ENCODE measurements at regions of chr9 and their contacts with region 1.

Region 1: DNA sequence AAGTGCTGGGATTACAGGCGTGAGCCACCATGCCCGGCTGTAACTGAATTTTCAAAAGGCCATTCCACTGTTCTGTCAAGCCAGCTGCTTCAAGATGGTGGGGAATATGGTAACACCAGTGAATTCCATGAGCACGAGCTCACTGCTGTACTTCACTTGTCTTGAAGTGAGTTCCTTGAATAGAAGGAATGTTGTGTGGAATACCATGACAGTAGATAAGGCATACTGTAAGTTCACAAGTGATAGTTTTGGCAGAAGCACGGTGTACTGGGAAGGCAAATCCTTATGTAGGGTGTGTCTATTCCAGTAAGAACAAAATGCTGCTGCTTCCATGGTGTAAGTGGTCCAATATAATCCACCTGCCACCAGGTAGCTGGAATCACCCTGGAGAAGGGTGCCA is 6.6 kb upstream of the PRXL2C start:
- DNase-seq: no peak
- ATAC-seq: no peak
- H3K4me3 ChIP-seq: no peak overlapping the region
- H3K27ac ChIP-seq: no peak overlapping the region
- H3K4me1 ChIP-seq: peaks cover 5% of the 10 kb centered on the region
- H3K27me3 ChIP-seq: no peaks in the 10 kb centered on the region

Region 2: DNA sequence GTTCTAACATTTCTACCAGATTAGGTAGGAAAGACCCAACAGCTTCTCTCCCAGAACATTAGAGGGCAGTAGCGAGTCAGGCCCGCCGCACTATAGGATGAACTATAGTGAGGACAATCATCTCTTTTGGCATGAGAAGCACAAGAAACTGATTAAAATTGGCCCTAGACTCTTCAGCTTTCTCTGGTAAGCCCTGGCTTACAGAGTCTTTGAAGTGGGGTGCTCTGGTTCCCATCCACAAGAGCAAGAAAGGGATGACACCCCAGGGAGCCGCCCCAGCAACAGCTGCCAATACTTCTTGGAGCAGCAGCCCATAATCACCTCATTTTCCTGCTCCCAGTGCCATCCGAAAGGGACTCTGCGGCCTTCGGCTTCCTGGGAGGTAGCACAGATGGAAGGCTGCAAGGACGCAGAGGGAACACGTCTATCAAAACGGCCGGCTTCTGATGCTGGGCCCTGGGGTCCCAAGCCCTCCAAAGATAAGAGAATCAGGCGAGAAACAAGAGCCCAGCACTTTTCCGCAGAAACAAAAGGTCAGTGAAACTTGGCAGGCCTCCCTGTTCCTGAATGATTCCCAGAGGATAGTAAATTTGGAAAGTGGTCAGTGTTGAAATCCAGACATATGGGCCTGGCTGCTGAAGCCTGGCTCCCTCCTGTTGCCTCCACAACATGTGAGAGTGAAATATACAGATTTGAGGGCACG is 429.0 kb before region 1 on chr9:
- intact Hi-C with region 1: loop called in 1 of 4 experiments (anchors 10 kb)
- DNase-seq: peak; percentile 78 to 90 (median 84)
- ATAC-seq: peak; percentile 90 to 94
- H3K4me3 ChIP-seq: no peak overlapping the region
- H3K27ac ChIP-seq: peak overlapping the region; percentile 77
- H3K4me1 ChIP-seq: peaks cover 1% of the 10 kb centered on the region
- H3K27me3 ChIP-seq: peaks cover 3% of the 10 kb centered on the region

Region 3: DNA sequence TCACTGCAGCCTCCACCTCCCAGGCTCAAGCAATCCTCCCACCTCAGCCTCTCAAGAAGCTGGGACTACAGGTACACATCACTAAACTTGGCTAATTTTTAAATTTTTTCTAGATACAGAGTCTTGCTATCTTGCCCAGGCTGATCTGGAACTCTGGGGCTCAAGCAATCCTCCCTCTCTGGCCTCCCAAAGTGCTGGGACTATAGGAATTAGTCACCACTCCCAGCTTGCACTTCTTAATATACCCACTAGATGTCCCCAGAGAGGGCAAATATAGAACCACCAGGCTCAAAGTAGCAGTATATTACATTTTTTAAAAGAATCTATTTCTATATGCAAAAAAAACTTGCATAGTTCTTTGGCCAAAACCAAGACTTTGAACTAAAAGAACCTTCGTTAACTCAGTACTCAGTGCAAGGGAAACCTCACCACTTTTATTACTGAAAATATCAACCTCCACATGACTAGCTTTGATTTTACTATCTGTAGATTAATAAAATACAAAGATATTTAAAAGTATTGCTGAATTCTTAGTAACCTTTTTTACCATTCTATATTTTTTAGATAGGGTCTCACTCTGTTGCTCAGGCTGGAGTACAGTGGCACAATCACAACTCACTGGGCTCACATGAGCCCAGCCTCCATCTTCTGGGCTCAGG is 333.9 kb before region 1 on chr9:
- intact Hi-C with region 1: loop called (anchors 5 to 10 kb)
- DNase-seq: no peak
- ATAC-seq: peak; percentile 55 to 76
- H3K4me3 ChIP-seq: no peak overlapping the region
- H3K27ac ChIP-seq: no peak overlapping the region
- H3K4me1 ChIP-seq: no peaks in the 10 kb centered on the region
- H3K27me3 ChIP-seq: no peaks in the 10 kb centered on the region

Region 4: GRCh38 chr9:96449845-96450612 is 211.7 kb before region 1 on chr9 and contains the start of gene HABP4:
- intact Hi-C with region 1: loop called in 1 of 4 experiments (anchors 10 kb)
- DNase-seq: peak; percentile 98 to 100 (median 99)
- ATAC-seq: peak; percentile 99
- H3K4me3 ChIP-seq: peak within 1 kb of the TSS; percentile 70
- H3K27ac ChIP-seq: peak within 1 kb of the TSS; percentile 89
- H3K4me1 ChIP-seq: no peaks in the 10 kb centered on the region
- H3K27me3 ChIP-seq: no peaks in the 10 kb centered on the region
- total RNA-seq, gene HABP4: 17.1 to 21.7 (median 18.5) TPM

Measured in right cardiac atrium (tissue), 5 donors.